CD14-positive monocyte (primary cell): ENCODE measurements at regions of chr1 and their contacts with region 1.

Region 1: DNA sequence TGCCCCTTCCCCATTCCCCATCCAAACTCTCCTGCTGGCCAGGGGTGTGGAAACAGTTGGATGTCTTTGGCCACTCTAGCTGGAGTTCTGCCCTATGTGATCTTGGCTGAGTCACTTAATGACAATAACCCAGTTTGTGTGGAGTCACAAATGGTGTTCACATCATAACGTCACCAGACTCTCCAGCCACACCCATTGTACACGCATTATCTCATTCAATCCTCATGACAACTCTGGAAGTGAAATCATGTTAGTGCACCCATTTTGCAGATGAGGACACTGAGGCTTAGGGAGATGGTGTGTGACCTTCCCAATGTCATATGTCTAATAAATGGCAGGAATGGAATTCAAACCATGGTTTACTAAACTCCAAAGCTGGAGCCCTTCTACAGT is 1.2 kb upstream of the CDA start:
- DNase-seq: peak; percentile 69 to 88 (median 75)
- H3K4me3 ChIP-seq: no peak overlapping the region
- H3K4me3 Mint-ChIP-seq: no peak overlapping the region
- H3K27ac ChIP-seq: peak overlapping the region in 1 of 2 donors; percentile 93
- H3K27ac Mint-ChIP-seq: peak overlapping the region; percentile 95 to 99 (median 97)
- H3K4me1 ChIP-seq: peaks cover 44 to 54% of the 10 kb centered on the region in 2 donors
- H3K4me1 Mint-ChIP-seq: peaks cover 59% of the 10 kb centered on the region
- H3K27me3 ChIP-seq: no peaks in the 10 kb centered on the region
- H3K27me3 Mint-ChIP-seq: peaks cover 0 to 5% (median 1%) of the 10 kb centered on the region in 3 donors
- CTCF ChIP-seq: no peak

Region 2: GRCh38 chr1:20446796-20447195 is 140.9 kb before region 1 on chr1:
- intact Hi-C with region 1: no loop called
- DNase-seq: no peak
- H3K4me3 ChIP-seq: no peak overlapping the region
- H3K4me3 Mint-ChIP-seq: no peak overlapping the region
- H3K27ac ChIP-seq: no peak overlapping the region
- H3K27ac Mint-ChIP-seq: no peak overlapping the region
- H3K4me1 ChIP-seq: no peaks in the 10 kb centered on the region
- H3K4me1 Mint-ChIP-seq: no peaks in the 10 kb centered on the region
- H3K27me3 ChIP-seq: no peaks in the 10 kb centered on the region
- H3K27me3 Mint-ChIP-seq: peaks cover 9 to 18% (median 14%) of the 10 kb centered on the region in 3 donors
- CTCF ChIP-seq: no peak

Region 3: DNA sequence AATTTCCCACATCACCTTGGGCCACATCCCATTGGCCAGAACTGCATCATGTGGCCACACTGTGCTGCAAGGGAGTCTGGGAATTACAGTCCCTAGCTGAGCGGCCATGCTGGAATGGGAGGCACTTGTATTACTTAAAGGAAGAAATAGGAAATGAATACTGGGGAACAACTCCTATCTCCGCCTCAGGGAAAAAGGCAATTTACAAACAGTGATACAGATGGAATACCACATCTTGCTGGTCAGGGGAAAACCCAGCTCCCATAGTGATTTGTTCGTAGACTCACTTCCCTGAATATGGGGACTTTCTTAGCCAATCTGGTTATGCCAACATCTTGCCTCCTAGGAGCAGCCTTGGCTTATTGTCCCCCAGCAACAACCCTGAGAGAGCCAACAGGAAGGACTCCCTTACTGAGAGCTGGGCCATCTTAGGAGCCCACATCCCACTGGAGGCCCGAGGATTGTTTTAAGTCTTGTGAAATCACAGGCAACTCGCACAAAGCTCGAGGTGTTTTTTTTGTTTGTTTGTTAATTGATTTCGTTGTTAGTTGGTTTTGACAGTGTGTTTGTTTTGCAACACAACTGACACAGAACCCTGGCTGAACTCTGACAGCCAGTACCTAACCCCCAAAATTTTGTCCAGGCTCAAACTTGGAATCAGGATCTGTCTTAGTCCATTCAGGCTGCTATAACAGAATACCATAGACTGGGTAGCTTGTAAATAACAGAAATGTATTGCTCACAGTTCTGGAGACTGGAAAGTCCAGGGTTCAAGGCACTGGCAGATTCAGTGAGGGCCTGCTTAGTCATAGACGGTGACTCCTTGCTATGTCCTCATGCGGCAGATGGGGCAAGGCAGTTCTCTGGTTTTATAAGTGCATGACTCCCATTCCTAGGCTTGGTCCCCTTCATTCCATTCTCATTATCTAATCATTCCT is 16.1 kb after region 1 on chr1:
- intact Hi-C with region 1: loop called in 1 of 2 experiments (anchors 1 kb)
- DNase-seq: peak; percentile 74 to 95 (median 85)
- H3K4me3 ChIP-seq: peak overlapping the region in 1 of 3 experiments; percentile 54
- H3K4me3 Mint-ChIP-seq: peak overlapping the region; percentile 27 to 29
- H3K27ac ChIP-seq: peak overlapping the region; percentile 68 to 85
- H3K27ac Mint-ChIP-seq: peak overlapping the region; percentile 83 to 96 (median 94)
- H3K4me1 ChIP-seq: peaks cover 42 to 61% of the 10 kb centered on the region in 2 donors
- H3K4me1 Mint-ChIP-seq: peaks cover 59% of the 10 kb centered on the region
- H3K27me3 ChIP-seq: no peaks in the 10 kb centered on the region
- H3K27me3 Mint-ChIP-seq: no peaks in the 10 kb centered on the region
- CTCF ChIP-seq: no peak

Region 4: DNA sequence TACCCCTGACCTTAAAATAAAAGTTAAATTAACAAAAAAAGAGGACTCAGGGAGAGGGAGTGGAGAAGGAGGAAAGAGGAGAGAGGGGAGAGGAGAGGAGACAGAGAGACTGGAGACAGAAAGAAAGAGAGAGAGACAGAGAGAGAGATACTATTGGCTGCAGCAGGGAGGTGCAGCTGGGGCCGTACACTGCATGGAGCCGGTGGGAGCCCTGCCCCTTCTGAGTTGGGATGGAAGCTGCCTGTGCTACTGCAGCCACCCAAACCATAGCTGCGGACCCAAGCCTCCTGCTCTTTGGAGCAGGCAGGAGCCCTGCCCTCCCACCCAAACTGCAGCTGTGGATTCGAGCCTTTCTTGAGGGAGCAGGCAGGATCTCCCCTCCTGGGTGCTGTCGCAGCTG is 232.2 kb after region 1 on chr1:
- intact Hi-C with region 1: no loop called
- DNase-seq: no peak
- H3K4me3 ChIP-seq: no peak overlapping the region
- H3K4me3 Mint-ChIP-seq: no peak overlapping the region
- H3K27ac ChIP-seq: no peak overlapping the region
- H3K27ac Mint-ChIP-seq: no peak overlapping the region
- H3K4me1 ChIP-seq: no peaks in the 10 kb centered on the region
- H3K4me1 Mint-ChIP-seq: no peaks in the 10 kb centered on the region
- H3K27me3 ChIP-seq: no peaks in the 10 kb centered on the region
- H3K27me3 Mint-ChIP-seq: no peaks in the 10 kb centered on the region
- CTCF ChIP-seq: no peak